CD8-positive, alpha-beta T cell (primary cell): ENCODE measurements at regions of chr13 and their contacts with region 1.

Region 1: GRCh38 chr13:77250975-77251374 is 75.9 kb downstream of the MYCBP2 start:
- DNase-seq: no peak
- ATAC-seq: no peak
- H3K4me3 ChIP-seq: no peak overlapping the region
- H3K4me3 Mint-ChIP-seq: no peak overlapping the region
- H3K27ac ChIP-seq: no peak overlapping the region
- H3K27ac Mint-ChIP-seq: no peak overlapping the region
- H3K4me1 ChIP-seq: no peaks in the 10 kb centered on the region
- H3K4me1 Mint-ChIP-seq: peaks cover 32% of the 10 kb centered on the region
- H3K27me3 ChIP-seq: no peaks in the 10 kb centered on the region
- H3K27me3 Mint-ChIP-seq: no peaks in the 10 kb centered on the region
- CTCF ChIP-seq: no peak

Region 2: GRCh38 chr13:77026818-77027585 is 224.0 kb before region 1 on chr13 and contains the start of gene FBXL3:
- CTCF ChIA-PET with region 1: no interaction called
- POLR2A ChIA-PET with region 1: no interaction called
- intact Hi-C with region 1: no loop called
- DNase-seq: peak; percentile 68 to 92 (median 80)
- ATAC-seq: peak; percentile 64
- H3K4me3 ChIP-seq: peak within 1 kb of the TSS; percentile 73 to 80
- H3K4me3 Mint-ChIP-seq: peak within 1 kb of the TSS; percentile 97
- H3K27ac ChIP-seq: peak within 1 kb of the TSS; percentile 80 to 97
- H3K27ac Mint-ChIP-seq: peak within 1 kb of the TSS; percentile 99
- H3K4me1 ChIP-seq: peaks cover 40% of the 10 kb centered on the region
- H3K4me1 Mint-ChIP-seq: peaks cover 51% of the 10 kb centered on the region
- H3K27me3 ChIP-seq: no peaks in the 10 kb centered on the region
- H3K27me3 Mint-ChIP-seq: no peaks in the 10 kb centered on the region
- CTCF ChIP-seq: no peak
- total RNA-seq, gene FBXL3: 91.3 to 97.0 TPM

Region 3: DNA sequence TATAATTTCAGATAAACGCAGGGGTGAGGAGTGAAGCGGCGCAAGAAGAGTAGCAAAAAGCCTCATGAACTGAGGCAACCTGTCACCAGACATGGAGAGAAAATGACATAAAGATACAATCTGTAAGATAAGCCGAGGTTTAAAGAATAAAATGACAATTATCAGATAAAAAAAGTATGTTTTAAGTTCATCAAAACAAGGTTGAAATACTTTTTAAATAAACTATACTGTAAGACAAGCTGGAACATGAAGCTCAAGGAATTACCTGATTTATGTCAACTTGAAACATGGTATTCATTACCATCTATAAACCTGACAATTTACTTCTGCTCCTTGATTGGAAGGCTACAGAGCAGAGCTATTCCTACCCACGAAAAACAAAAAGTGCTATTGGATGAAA is 14.4 kb after region 1 on chr13:
- CTCF ChIA-PET with region 1: no interaction called
- POLR2A ChIA-PET with region 1: no interaction called
- intact Hi-C with region 1: loop called in 1 of 2 experiments (anchors 2 kb)
- DNase-seq: no peak
- ATAC-seq: no peak
- H3K4me3 ChIP-seq: no peak overlapping the region
- H3K4me3 Mint-ChIP-seq: no peak overlapping the region
- H3K27ac ChIP-seq: no peak overlapping the region
- H3K27ac Mint-ChIP-seq: no peak overlapping the region
- H3K4me1 ChIP-seq: no peaks in the 10 kb centered on the region
- H3K4me1 Mint-ChIP-seq: no peaks in the 10 kb centered on the region
- H3K27me3 ChIP-seq: no peaks in the 10 kb centered on the region
- H3K27me3 Mint-ChIP-seq: no peaks in the 10 kb centered on the region
- CTCF ChIP-seq: no peak

Region 4: DNA sequence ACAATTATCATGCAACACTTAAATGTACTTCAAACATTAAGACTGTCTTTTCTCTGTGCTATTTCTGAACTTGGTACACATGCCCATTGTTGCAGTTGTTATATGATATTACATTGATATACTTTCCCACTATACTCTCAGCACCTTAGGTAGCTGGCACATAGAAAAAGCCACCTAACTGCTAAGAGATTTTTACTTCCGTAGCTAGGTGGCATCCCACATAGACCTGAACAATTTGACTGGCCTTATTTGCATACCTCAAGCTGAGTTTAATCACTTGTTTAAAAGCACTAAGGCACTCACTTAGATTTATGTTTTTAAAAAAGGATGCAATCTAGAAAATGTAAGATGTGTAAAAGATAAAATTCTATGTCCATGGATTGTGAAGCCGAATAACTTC is 1158.2 kb after region 1 on chr13:
- CTCF ChIA-PET with region 1: no interaction called
- POLR2A ChIA-PET with region 1: no interaction called
- intact Hi-C with region 1: no loop called
- DNase-seq: no peak
- ATAC-seq: no peak
- H3K4me3 ChIP-seq: no peak overlapping the region
- H3K4me3 Mint-ChIP-seq: no peak overlapping the region
- H3K27ac ChIP-seq: no peak overlapping the region
- H3K27ac Mint-ChIP-seq: no peak overlapping the region
- H3K4me1 ChIP-seq: no peaks in the 10 kb centered on the region
- H3K4me1 Mint-ChIP-seq: no peaks in the 10 kb centered on the region
- H3K27me3 ChIP-seq: no peaks in the 10 kb centered on the region
- H3K27me3 Mint-ChIP-seq: peaks cover 12% of the 10 kb centered on the region
- CTCF ChIP-seq: no peak